ENCODE measurements at regions of chr6 and their contacts with region 1.

Region 1: DNA sequence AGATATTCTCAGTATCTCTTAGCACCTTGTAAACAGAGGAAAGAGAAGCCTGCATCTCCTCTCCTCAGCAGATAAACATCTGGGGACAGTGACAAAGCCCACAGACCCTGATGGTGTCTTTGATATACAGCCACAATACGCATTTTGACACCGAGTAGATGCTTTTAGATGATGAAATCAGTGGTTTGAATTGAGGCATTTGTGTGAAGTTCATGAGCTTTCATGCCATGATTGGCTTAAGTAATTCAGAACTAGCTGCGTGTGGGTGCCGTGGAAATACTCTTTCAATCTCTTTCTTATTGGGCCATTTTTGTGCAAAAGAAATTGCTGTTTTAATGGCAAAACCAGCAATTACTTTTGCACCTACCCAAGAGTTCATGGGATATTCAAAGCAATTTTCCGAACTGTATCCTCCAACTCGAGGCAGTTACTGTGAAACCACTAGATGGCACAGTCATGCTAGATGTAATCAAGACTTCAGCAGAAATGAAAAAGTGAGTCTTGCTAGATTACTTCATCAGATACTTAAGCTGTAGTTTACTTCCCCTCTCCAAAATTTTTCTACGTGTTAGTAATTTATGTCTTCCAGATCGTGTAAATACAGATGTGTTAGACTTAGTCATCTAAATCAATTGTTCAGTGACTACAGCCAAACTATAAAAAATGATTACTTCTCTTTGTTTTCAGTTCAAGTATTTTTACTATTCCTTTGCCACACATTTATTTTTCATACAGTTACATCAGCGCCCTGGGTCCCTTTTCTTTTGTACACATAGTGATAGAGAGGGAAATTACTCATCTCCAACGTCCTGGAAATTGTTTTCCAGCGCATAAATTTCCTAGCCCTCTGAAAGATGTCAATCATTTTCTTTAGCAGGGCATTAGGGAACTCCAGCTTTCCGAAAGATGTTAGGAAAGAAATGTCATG is 49.4 kb downstream of the IYD start:
- DNase-seq: peak; percentile 91
- H3K4me3 ChIP-seq: peak overlapping the region in 2 of 3 experiments; percentile 30 to 53
- H3K27ac ChIP-seq: peak overlapping the region; percentile 84
- H3K4me1 ChIP-seq: peaks cover 10% of the 10 kb centered on the region
- H3K27me3 ChIP-seq: no peaks in the 10 kb centered on the region
- CTCF ChIP-seq: peak; percentile 64
- POLR2A ChIP-seq: no peak

Region 2: GRCh38 chr6:150079604-150080003 is 338.6 kb before region 1 on chr6:
- CTCF ChIA-PET with region 1: interaction called, 11 read pairs
- POLR2A ChIA-PET with region 1: no interaction called
- dilution Hi-C with region 1: no loop called
- intact Hi-C with region 1: no loop called
- DNase-seq: no peak
- H3K4me3 ChIP-seq: no peak overlapping the region
- H3K27ac ChIP-seq: no peak overlapping the region
- H3K4me1 ChIP-seq: no peaks in the 10 kb centered on the region
- H3K27me3 ChIP-seq: peaks cover 11 to 12% of the 10 kb centered on the region in 2 experiments
- CTCF ChIP-seq: no peak
- POLR2A ChIP-seq: no peak

Region 3: DNA sequence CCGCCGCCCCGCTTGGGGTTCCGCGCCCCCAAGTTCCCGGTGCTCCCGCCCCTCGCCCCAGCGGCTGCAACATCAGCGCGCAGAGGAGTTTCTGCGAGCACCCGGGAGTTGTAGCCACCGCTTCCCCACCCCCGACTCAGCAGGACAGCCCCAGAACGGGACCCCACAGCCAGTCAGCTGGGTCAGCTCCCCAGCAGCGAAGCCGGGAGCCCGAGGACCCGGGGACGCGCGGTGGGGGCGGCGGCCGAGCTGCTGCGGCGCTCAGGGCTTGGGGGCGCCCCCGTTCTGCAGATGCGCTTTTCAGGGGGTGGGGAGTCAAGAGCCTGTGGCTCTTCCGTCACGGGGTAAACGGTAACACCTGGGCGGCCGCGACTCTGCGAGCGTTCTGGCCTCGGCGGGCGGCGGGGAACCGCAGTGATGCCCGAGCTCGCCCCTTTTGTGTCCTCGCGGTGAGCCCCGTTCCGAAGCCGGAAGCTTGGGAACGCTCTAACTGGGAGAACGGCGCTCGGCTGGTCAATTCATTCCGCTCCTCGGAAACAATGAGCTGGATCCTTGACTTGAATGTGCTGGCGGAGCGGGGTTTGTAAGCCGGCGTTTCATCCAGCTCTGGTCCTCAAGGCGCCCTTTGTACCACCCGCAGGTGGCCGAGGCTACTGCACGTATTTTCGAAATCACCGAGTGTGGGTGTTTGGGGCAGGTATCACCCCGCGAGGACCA is 182.3 kb after region 1 on chr6:
- CTCF ChIA-PET with region 1: interaction called, 80 read pairs
- POLR2A ChIA-PET with region 1: no interaction called
- dilution Hi-C with region 1: no loop called
- intact Hi-C with region 1: loop called (anchors 1 kb)
- DNase-seq: peak; percentile 76
- H3K4me3 ChIP-seq: peak overlapping the region; percentile 68 to 80 (median 70)
- H3K27ac ChIP-seq: peak overlapping the region; percentile 35
- H3K4me1 ChIP-seq: peaks cover 8% of the 10 kb centered on the region
- H3K27me3 ChIP-seq: peaks cover 21 to 31% of the 10 kb centered on the region in 2 experiments
- CTCF ChIP-seq: peak; percentile 43 to 61
- POLR2A ChIP-seq: no peak

Region 4: DNA sequence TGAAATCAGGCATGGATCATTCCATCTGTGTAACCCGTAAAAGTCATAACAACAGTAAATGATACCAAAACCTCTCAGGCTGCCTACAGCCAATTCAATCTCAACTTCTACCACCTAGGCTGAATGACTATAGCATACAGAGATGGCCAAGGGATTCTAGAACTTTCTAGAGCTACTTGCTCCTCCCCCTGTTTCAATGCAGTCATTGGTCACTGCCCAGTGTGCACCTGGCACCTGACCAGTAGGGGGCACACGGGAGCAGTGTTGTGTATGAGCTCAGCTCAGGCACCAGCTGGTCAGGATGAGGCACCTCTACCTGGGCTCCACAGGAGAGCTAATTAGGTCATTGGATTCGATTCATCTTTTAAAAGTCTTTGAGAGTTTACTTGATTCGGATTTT is 267.7 kb after region 1 on chr6:
- CTCF ChIA-PET with region 1: interaction called, 10 read pairs
- POLR2A ChIA-PET with region 1: no interaction called
- dilution Hi-C with region 1: no loop called
- intact Hi-C with region 1: loop called (anchors 1 kb)
- DNase-seq: peak; percentile 23
- H3K4me3 ChIP-seq: no peak overlapping the region
- H3K27ac ChIP-seq: no peak overlapping the region
- H3K4me1 ChIP-seq: peaks cover 60% of the 10 kb centered on the region
- H3K27me3 ChIP-seq: no peaks in the 10 kb centered on the region
- CTCF ChIP-seq: peak; percentile 44 to 46
- POLR2A ChIP-seq: no peak

Region 5: DNA sequence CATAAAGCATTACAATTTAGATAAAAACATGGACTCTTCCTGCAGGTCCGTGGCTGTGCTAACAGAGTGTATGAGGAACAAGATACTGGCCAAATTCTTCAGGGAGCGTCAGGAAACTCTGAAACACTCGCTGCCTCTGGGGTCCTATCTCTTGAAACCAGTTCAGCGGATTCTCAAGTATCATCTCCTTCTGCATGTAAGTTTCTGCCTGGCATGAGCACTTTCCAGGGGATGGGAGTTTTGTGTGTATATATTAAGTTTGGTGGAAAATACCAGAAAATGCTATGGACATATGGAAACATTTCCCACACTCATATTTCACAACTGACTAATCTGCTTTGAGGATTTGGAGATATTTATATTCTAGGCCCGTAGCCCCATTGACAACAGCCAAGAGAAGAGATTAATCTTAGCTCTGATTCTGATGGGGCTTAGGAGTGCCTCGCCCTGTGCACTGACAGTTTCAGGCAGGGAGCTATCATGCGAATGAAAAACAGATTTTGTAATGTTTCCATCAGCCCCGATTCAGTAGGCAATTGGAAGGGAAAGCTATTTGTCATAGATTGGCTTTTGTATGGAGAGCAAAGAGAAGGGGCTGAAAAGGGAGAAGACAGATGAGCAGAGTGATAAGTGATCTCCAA is 382.6 kb after region 1 on chr6:
- CTCF ChIA-PET with region 1: interaction called, 30 read pairs
- POLR2A ChIA-PET with region 1: no interaction called
- dilution Hi-C with region 1: no loop called
- intact Hi-C with region 1: no loop called
- DNase-seq: no peak
- H3K4me3 ChIP-seq: no peak overlapping the region
- H3K27ac ChIP-seq: no peak overlapping the region
- H3K4me1 ChIP-seq: no peaks in the 10 kb centered on the region
- H3K27me3 ChIP-seq: no peaks in the 10 kb centered on the region
- CTCF ChIP-seq: no peak
- POLR2A ChIP-seq: no peak

Region 6: DNA sequence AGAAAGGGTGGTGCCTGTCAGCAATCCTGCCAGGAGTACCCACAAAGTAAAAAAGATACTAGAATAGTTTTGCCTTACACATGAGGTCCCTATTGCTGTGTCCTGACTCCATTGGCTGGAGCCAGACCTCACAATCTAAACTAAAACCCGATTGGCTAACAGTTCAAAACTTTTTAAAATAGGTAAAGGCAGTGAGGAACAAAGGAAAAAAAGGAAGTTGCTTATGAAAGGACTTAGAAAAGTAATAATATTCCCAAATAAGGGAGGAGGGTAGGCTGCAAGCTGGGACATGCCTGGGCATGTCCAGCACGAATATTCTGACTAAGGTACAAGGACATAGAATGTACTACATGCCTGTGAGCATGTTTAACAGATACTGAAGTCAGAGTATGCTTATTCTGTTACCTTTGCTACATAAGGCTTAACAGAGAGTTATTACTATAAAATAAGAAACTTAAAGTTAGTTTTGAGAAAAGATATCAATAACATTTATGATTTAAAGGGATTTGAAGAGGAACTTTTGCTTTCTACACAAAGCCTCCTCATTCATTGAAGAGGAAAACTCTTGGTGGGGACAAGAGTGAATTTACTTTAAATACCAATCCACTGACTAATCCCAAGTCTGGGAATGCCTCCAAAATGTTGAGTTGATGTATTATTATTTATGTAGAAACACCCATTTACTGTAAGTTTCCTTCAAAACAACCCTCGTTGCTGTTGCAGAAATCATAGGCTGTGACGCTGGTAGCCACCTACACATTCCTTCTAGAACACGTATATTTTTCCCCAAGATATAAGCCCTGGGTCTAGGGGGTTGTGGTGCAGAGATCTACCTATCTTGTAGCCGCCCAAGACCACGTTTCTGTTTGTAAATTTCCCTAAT is 439.1 kb after region 1 on chr6:
- CTCF ChIA-PET with region 1: interaction called, 4 read pairs
- POLR2A ChIA-PET with region 1: no interaction called
- dilution Hi-C with region 1: no loop called
- intact Hi-C with region 1: loop called (anchors 1 kb)
- DNase-seq: peak; percentile 99
- H3K4me3 ChIP-seq: no peak overlapping the region
- H3K27ac ChIP-seq: peak overlapping the region; percentile 100
- H3K4me1 ChIP-seq: peaks cover 24% of the 10 kb centered on the region
- H3K27me3 ChIP-seq: no peaks in the 10 kb centered on the region
- CTCF ChIP-seq: no peak
- POLR2A ChIP-seq: peak; percentile 83

Region 7: GRCh38 chr6:150891888-150892485 is 473.8 kb after region 1 on chr6:
- CTCF ChIA-PET with region 1: interaction called, 12 read pairs
- POLR2A ChIA-PET with region 1: no interaction called
- dilution Hi-C with region 1: no loop called
- intact Hi-C with region 1: no loop called
- DNase-seq: peak; percentile 90
- H3K4me3 ChIP-seq: no peak overlapping the region
- H3K27ac ChIP-seq: peak overlapping the region; percentile 8
- H3K4me1 ChIP-seq: peaks cover 2% of the 10 kb centered on the region
- H3K27me3 ChIP-seq: no peaks in the 10 kb centered on the region
- CTCF ChIP-seq: peak; percentile 78 to 82
- POLR2A ChIP-seq: no peak

Region 8: DNA sequence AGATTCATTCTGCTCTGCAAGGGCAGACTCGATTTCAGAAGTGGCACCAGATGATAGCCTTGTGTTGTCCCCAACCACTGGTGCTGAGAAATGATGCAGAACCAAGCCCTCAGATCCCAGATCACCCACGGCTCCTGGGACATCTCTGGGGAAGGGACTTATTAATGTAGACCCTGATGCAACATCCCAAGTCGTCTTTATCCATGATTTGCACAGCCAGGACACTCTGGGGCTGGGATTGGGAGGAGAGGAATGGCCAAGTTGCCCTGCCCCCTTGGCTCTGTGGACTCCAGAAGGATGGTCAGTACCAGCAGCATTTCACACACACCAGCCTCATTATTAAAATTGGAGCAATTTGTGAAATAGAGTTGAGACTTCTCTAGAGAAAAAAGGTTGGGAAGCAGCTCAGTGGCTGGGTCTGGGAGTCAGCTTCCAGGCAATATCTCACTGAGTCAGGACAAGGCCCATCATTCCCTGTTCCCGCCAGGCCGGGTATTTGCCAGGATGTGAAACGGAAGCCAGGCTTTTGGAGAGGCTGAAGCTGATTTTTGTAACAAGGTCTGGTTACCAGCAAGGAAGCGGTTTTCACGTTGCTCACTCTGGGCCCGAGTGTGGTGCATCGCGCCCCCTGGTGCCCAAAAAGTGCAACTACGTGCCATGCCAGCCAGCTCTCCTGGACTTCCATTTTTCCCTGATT is 905.8 kb after region 1 on chr6:
- CTCF ChIA-PET with region 1: no interaction called
- POLR2A ChIA-PET with region 1: no interaction called
- dilution Hi-C with region 1: no loop called
- intact Hi-C with region 1: no loop called
- DNase-seq: peak; percentile 94
- H3K4me3 ChIP-seq: no peak overlapping the region
- H3K27ac ChIP-seq: peak overlapping the region; percentile 80
- H3K4me1 ChIP-seq: peaks cover 26% of the 10 kb centered on the region
- H3K27me3 ChIP-seq: no peaks in the 10 kb centered on the region
- CTCF ChIP-seq: peak; percentile 94 to 97
- POLR2A ChIP-seq: peak; percentile 28